ENCODE measurements at regions of chr5 and their contacts with region 1.

Region 1: GRCh38 chr5:217860-218456 is at the starts of genes CCDC127 and SDHA:
- DNase-seq: peak in 1 of 2 donors; percentile 92
- H3K4me3 ChIP-seq: peak within 1 kb of the TSS; percentile 92 to 100
- H3K27ac ChIP-seq: peak within 1 kb of the TSS; percentile 90
- H3K4me1 ChIP-seq: peaks cover 43% of the 10 kb centered on the region
- H3K27me3 ChIP-seq: no peaks in the 10 kb centered on the region
- CTCF ChIP-seq: peak in 2 of 3 experiments; percentile 40 to 44
- POLR2A ChIP-seq: peak in 1 of 2 donors; percentile 91
- total RNA-seq, gene CCDC127: 4.2 TPM
- total RNA-seq, gene SDHA: 84.7 TPM

Region 2: DNA sequence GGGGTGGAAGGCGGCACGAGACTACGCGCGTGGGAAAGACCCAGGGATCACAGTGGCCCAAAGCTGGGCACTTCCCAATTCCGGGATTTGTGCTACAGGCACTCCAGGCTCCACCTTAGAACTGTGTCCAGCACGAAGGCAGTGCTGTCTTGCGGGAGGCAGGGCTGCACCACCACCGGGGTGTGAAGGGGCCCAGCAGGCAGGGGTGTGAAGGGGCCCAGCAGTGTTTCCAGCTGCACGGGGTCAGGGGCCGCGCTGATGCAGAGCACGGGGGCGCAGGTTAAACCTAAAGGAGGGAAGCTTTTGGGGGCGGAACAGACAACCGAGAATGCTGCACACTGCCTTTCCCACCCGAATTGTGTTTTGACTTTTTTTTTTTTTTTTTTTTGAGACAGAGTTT is 52.4 kb after region 1 on chr5:
- intact Hi-C with region 1: loop called (anchors 2 kb)
- DNase-seq: peak; percentile 31 to 88
- H3K4me3 ChIP-seq: peak overlapping the region in 1 of 2 donors; percentile 75
- H3K27ac ChIP-seq: no peak overlapping the region
- H3K4me1 ChIP-seq: peaks cover 27% of the 10 kb centered on the region
- H3K27me3 ChIP-seq: no peaks in the 10 kb centered on the region
- CTCF ChIP-seq: no peak
- POLR2A ChIP-seq: no peak

Measured in vagina (tissue), 2 donors.